ENCODE measurements at regions of chr6 and their contacts with region 1.

Region 1: DNA sequence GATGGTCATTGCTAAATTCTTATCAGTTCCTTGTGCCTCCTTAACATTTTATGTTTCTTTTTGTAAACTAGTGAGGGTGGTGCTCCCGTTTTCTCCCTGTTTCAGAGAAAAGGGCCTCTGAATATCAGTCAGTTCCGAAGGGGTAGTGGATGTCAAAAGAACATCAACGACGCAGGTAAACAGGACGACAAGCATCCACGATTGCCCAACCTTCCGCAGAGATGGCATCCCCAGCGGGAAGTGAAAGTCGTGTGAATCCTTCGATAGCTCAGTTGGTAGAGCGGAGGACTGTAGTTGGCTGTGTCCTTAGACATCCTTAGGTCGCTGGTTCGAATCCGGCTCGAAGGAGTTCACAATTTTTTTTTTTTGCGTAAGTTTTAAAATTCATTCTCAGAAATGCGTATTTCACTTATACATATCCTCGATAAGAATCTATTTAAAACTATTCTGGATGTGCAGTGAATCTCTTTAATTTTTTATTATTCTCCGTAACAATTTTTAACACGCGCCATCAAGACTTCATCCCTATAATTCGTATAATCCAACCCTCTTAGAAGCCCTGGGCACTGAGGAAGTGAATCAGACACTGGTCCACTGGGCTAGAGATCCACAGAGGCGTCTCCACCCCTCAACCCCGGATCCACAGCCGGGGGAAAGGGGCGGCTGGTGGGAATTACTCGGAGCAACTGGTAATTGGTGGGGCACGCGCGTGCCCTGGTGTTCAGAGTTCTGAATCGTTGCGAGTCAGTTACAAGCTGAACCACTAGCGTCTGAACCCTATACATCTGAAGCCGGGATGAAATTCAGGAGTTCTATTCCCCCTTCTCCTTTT is 27.9 kb upstream of the ABT1 start:
- DNase-seq: peak; percentile 98
- ATAC-seq: peak; percentile 56
- H3K4me3 ChIP-seq: peak overlapping the region; percentile 84
- H3K27ac ChIP-seq: 0 out of 2 replicates have a peak overlapping the region, but pooled peaks have one; percentile 5
- H3K4me1 ChIP-seq: peaks cover 5% of the 10 kb centered on the region; the same call in 1 of the 2 replicates
- H3K27me3 ChIP-seq: no peaks in the 10 kb centered on the region
- CTCF ChIP-seq: peak; percentile 54

Region 2: GRCh38 chr6:26234421-26235296 is 334.2 kb before region 1 on chr6:
- CTCF ChIA-PET with region 1: no interaction called
- POLR2A ChIA-PET with region 1: no interaction called
- intact Hi-C with region 1: loop called (anchors 5 kb)
- DNase-seq: peak; percentile 97
- ATAC-seq: peak; percentile 69
- H3K4me3 ChIP-seq: peak overlapping the region; percentile 68
- H3K27ac ChIP-seq: peak overlapping the region; percentile 79
- H3K4me1 ChIP-seq: peaks cover 40% of the 10 kb centered on the region
- H3K27me3 ChIP-seq: no peaks in the 10 kb centered on the region
- CTCF ChIP-seq: no peak

Region 3: GRCh38 chr6:26342106-26343004 is 226.5 kb before region 1 on chr6:
- CTCF ChIA-PET with region 1: interaction called, 9 read pairs
- POLR2A ChIA-PET with region 1: no interaction called
- intact Hi-C with region 1: loop called (anchors 1 kb)
- DNase-seq: peak; percentile 35
- ATAC-seq: no peak
- H3K4me3 ChIP-seq: peak overlapping the region; percentile 61
- H3K27ac ChIP-seq: no peak overlapping the region
- H3K4me1 ChIP-seq: peaks cover 24% of the 10 kb centered on the region
- H3K27me3 ChIP-seq: no peaks in the 10 kb centered on the region
- CTCF ChIP-seq: no peak

Region 4: GRCh38 chr6:26415791-26416190 is 153.0 kb before region 1 on chr6:
- CTCF ChIA-PET with region 1: no interaction called
- POLR2A ChIA-PET with region 1: no interaction called
- intact Hi-C with region 1: no loop called
- DNase-seq: peak; percentile 14
- ATAC-seq: no peak
- H3K4me3 ChIP-seq: no peak overlapping the region
- H3K27ac ChIP-seq: no peak overlapping the region
- H3K4me1 ChIP-seq: peaks cover 4% of the 10 kb centered on the region; the same call in 1 of the 2 replicates
- H3K27me3 ChIP-seq: no peaks in the 10 kb centered on the region
- CTCF ChIP-seq: no peak

Region 5: DNA sequence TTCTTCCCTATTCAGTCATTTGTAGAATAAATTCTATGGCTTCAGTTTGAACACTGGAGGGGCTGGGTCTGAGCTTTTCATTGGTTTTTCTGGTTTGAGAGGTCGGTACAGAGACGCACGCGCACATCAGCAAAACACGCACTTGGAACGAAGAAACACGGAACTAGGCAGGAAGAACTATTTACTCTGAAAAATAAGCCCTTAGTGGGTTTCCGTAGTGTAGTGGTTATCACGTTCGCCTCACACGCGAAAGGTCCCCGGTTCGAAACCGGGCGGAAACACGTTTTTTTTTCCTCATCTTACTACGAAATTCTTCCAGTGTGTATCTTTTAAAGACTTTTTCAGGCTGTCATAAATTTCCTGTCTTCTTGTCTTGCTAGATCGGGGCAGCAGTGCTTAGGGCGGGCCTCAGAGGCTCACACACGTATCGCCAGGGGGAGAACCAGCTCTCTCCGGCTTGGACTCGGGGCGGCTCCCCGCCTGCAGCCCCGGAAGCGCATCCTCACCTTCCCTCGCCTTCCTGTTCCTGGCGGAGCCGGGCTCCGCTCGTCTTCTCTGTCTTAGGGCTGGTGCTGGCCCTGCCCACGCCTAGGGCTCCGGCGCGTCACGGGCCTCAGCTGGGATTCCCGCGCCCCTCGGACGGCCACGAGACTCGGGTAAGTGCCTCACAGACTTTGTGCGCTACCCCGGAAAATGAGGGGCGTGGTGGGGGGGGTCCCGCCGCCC is 30.8 kb before region 1 on chr6 and contains the start of gene HMGN4:
- CTCF ChIA-PET with region 1: no interaction called
- POLR2A ChIA-PET with region 1: no interaction called
- intact Hi-C with region 1: loop called (anchors 1 kb)
- DNase-seq: peak; percentile 89
- ATAC-seq: peak; percentile 77
- H3K4me3 ChIP-seq: peak within 1 kb of the TSS; percentile 98
- H3K27ac ChIP-seq: peak within 1 kb of the TSS; percentile 86
- H3K4me1 ChIP-seq: peaks cover 18% of the 10 kb centered on the region
- H3K27me3 ChIP-seq: no peaks in the 10 kb centered on the region
- CTCF ChIP-seq: no peak; the same call in 1 of the 2 replicates
- total RNA-seq, gene HMGN4: 54.8 and 57.5 TPM in 2 replicates

Region 6: GRCh38 chr6:26581164-26581915 is 12.5 kb after region 1 on chr6:
- CTCF ChIA-PET with region 1: interaction called, 13 read pairs
- POLR2A ChIA-PET with region 1: interaction called, 3 read pairs
- intact Hi-C with region 1: no loop called
- DNase-seq: no peak
- ATAC-seq: no peak
- H3K4me3 ChIP-seq: no peak overlapping the region
- H3K27ac ChIP-seq: no peak overlapping the region
- H3K4me1 ChIP-seq: no peaks in the 10 kb centered on the region
- H3K27me3 ChIP-seq: no peaks in the 10 kb centered on the region
- CTCF ChIP-seq: no peak